ENCODE measurements at regions of chr2 and their contacts with region 1.

Region 1: DNA sequence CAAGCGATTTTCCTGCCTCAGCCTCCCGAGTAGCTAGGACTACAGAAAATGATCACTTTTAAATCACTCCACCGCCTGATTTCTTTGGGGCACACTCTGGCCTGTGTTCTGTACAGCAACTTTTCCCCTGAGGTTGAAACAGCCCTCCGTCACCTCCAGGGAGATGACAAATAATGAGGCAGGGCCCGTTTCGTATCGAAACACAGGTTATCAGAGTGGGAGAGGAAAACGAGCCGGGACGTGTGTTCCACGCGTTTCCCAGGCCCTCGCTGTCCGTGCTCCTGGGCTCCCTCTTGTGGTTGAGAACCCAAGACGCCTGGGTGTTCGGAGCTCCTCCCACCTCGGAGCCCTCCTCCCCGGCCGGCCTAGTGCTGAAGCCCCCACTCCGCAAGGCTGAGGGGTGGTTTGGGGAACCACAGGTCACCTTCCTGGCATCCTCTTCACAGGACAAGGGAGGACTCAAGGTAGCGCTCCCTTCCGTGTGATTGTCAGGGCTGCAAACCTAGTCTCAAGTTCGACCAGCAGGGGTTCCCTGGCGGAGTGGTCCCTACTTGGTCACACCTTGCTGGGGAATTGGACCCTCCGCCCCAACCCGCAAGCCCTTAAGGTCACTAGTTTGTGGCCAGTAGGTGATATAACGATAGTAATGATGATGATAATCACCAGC is 12.8 kb downstream of the ATP6V1B1 start:
- DNase-seq: peak; percentile 87
- H3K4me3 ChIP-seq: peak overlapping the region; percentile 27 to 54
- H3K27ac ChIP-seq: peak overlapping the region in 1 of 2 experiments; percentile 44; a peak in 2 of 4 replicates
- H3K4me1 ChIP-seq: peaks cover 5 to 8% of the 10 kb centered on the region in 2 experiments; a peak in 2 of 4 replicates
- H3K27me3 ChIP-seq: no peaks in the 10 kb centered on the region
- CTCF ChIP-seq: peak; percentile 81
- EP300 ChIP-seq: no peak
- RAD21 ChIP-seq: peak; percentile 56

Region 2: DNA sequence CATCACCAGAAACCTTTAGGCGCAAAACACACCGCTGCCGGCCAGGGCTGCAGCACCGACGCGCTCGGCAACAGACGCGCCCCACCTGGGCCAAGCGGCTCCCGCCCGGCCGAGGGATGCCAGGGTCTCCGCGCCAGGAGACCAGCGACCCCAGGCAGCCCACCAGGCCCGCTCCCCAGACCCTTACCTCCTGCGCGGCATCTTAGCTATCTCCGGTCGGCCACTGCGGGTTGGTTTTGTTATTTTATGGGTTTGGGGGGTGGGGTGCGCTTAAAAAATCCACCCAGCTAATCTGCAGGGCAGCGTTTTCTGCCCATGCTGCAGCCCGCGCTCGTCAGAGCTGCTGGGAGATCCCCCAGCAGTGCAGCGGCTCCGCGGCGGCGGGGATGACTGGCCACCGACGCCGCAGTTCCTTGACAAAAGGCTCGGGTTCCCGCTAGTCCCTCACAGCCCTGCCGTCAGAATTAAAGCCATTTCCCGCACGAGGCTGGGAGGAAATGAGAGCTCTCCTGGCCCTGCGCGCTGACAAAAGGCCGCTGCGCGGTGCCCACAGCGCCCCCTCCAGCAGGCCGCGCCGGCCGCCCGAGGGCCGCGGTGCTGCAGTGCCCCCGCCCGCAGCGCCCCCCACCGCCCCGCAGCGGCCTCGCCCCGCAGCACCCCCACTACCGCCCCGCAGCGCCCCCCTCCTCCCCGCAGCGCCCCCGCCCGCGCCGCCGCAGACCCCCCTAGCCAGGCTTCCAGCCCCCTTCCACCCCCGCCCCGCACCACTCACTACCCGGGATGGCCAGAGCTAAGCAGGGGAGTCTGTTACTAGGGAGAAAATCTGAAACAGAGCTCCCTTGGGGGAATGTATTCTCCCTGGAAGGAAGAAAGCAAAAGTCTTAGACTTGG is 180.5 kb before region 1 on chr2 and contains the start of gene ADD2:
- CTCF ChIA-PET with region 1: interaction called, 21 read pairs
- POLR2A ChIA-PET with region 1: no interaction called
- DNase-seq: peak; percentile 93
- H3K4me3 ChIP-seq: peak within 1 kb of the TSS; percentile 50 to 52
- H3K27ac ChIP-seq: peak within 1 kb of the TSS in 1 of 2 experiments; percentile 73; a peak in 2 of 4 replicates
- H3K4me1 ChIP-seq: peaks cover 0 to 10% of the 10 kb centered on the region in 2 experiments; a peak in 2 of 4 replicates
- H3K27me3 ChIP-seq: peaks cover 25% of the 10 kb centered on the region
- CTCF ChIP-seq: peak; percentile 38
- EP300 ChIP-seq: no peak
- RAD21 ChIP-seq: no peak
- polyA plus RNA-seq, gene ADD2: 0.30 and 0.50 TPM in 2 replicates

Region 3: DNA sequence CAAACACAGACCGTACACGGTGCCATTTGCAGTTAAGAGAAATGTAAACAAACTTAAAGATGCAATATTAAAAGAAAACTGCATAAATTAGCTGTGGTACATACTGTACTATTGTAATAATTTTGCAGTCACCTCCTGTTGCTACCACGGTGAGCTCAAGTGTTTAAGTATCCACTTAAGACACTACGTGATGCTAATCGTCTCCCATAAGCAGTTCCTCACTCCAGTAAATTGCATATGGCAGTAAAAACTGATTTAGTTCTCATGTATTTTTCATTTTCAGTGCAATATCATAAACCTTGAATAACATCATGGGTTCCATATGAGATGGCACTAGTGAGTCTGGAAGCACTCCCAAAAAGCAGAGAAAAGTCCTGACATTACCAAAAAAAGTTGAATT is 142.5 kb before region 1 on chr2:
- CTCF ChIA-PET with region 1: interaction called, 12 read pairs
- POLR2A ChIA-PET with region 1: no interaction called
- DNase-seq: no peak
- H3K4me3 ChIP-seq: no peak overlapping the region
- H3K27ac ChIP-seq: no peak overlapping the region
- H3K4me1 ChIP-seq: no peaks in the 10 kb centered on the region
- H3K27me3 ChIP-seq: no peaks in the 10 kb centered on the region; the same call in 1 of the 2 replicates
- CTCF ChIP-seq: no peak
- EP300 ChIP-seq: no peak
- RAD21 ChIP-seq: no peak

Region 4: GRCh38 chr2:70861777-70862625 is 86.5 kb before region 1 on chr2:
- CTCF ChIA-PET with region 1: interaction called, 127 read pairs
- POLR2A ChIA-PET with region 1: no interaction called
- DNase-seq: peak; percentile 85
- H3K4me3 ChIP-seq: peak overlapping the region in 1 of 2 experiments; percentile 30; a peak in 1 of 4 replicates
- H3K27ac ChIP-seq: no peak overlapping the region
- H3K4me1 ChIP-seq: peaks cover 0 to 3% of the 10 kb centered on the region in 2 experiments; a peak in 1 of 4 replicates
- H3K27me3 ChIP-seq: 0 out of 2 replicates have a peak, but pooled peaks cover 8% of the 10 kb centered on the region
- CTCF ChIP-seq: peak; percentile 99
- EP300 ChIP-seq: no peak
- RAD21 ChIP-seq: peak; percentile 93

Region 5: GRCh38 chr2:70897203-70897976 is 51.1 kb before region 1 on chr2:
- CTCF ChIA-PET with region 1: interaction called, 27 read pairs
- POLR2A ChIA-PET with region 1: no interaction called
- DNase-seq: no peak
- H3K4me3 ChIP-seq: no peak overlapping the region
- H3K27ac ChIP-seq: no peak overlapping the region
- H3K4me1 ChIP-seq: peaks cover 0 to 13% of the 10 kb centered on the region in 2 experiments; a peak in 2 of 4 replicates
- H3K27me3 ChIP-seq: no peaks in the 10 kb centered on the region
- CTCF ChIP-seq: no peak
- EP300 ChIP-seq: no peak
- RAD21 ChIP-seq: no peak

Region 6: GRCh38 chr2:70926042-70926441 is 22.4 kb before region 1 on chr2:
- CTCF ChIA-PET with region 1: interaction called, 60 read pairs
- POLR2A ChIA-PET with region 1: no interaction called
- DNase-seq: no peak
- H3K4me3 ChIP-seq: no peak overlapping the region
- H3K27ac ChIP-seq: no peak overlapping the region
- H3K4me1 ChIP-seq: no peaks in the 10 kb centered on the region; a peak in 1 of 4 replicates
- H3K27me3 ChIP-seq: no peaks in the 10 kb centered on the region
- CTCF ChIP-seq: no peak
- EP300 ChIP-seq: no peak
- RAD21 ChIP-seq: no peak

Region 7: DNA sequence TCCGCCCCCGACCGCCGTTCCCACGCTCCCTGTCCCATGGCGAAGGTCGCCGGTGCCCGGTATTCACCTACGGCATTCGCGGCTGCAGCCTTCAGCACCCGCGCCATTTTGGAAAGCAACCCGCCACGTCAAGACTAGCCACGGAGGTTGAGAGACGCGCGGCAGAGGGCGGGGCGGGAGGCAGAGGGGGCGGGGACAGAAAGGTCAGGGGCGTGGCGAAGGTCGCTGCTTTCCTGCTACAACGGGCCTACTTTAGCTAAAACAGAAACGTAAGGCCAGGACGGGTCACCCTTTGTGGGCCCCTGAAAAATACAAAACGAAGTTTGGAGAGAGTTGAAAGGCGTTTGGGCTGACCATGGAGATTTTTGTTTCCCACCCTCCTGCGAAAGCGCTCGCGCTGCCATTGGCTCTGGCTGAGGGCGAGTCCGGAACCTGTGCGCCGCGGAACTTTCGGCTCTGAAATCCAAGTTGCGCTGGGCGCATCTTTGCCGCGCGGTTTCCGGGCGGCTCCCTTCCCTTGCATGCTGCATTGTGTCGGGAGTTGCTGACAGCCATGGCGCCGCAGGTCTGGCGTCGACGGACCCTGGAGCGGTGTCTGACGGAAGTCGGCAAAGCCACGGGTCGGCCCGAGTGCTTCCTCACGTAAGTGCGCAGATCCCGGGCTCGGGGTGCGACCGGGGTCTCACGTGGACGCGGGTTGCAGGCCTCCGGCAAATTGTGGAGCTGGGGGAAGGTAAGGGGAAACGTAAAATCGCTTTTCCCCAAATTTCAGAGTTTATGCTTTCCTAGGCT is 181.8 kb after region 1 on chr2 and contains the starts of genes MCEE and MPHOSPH10:
- CTCF ChIA-PET with region 1: no interaction called
- POLR2A ChIA-PET with region 1: no interaction called
- DNase-seq: peak; percentile 91
- H3K4me3 ChIP-seq: peak within 1 kb of the TSS; percentile 90 to 99
- H3K27ac ChIP-seq: peak within 1 kb of the TSS; percentile 85 to 93
- H3K4me1 ChIP-seq: peaks cover 4 to 11% of the 10 kb centered on the region in 2 experiments; a peak in 2 of 4 replicates
- H3K27me3 ChIP-seq: no peaks in the 10 kb centered on the region
- CTCF ChIP-seq: no peak
- EP300 ChIP-seq: peak in 1 of 2 experiments; percentile 20; a peak in 1 of 4 replicates
- RAD21 ChIP-seq: no peak
- polyA plus RNA-seq, gene MCEE: 6.2 and 7.5 TPM in 2 replicates
- polyA plus RNA-seq, gene MPHOSPH10: 8.7 and 9.2 TPM in 2 replicates

Measured in SK-N-SH (cell line).